ENCODE measurements at regions of chr10 and their contacts with region 1.

Region 1: DNA sequence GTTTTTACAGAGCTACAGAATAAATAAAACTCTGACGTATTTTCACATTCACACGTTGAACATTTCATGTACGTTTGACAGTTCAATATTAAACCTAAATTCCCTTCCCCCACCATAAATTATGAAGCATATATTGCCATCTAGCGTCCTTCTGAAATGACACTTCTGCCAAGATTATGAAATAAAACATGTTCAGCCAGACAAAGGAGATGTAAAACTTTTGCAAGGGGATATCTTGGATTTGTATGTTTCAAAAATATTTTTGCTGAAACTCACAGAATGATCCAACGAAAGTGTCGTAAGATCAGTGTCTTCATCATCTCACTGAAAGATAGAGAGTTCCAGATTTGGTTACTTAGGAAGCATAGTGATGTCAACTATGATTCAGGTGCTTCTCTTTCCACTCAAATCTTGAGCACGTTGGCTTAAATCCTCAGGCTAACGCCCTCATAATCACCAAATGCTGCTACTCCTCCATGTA is 904.3 kb downstream of the XPNPEP1 start:
- DNase-seq: no peak
- ATAC-seq: no peak
- H3K4me3 ChIP-seq: no peak overlapping the region
- H3K4me3 Mint-ChIP-seq: no peak overlapping the region
- H3K27ac ChIP-seq: no peak overlapping the region
- H3K27ac Mint-ChIP-seq: no peak overlapping the region
- H3K4me1 ChIP-seq: no peaks in the 10 kb centered on the region
- H3K4me1 Mint-ChIP-seq: no peaks in the 10 kb centered on the region
- H3K27me3 ChIP-seq: no peaks in the 10 kb centered on the region
- H3K27me3 Mint-ChIP-seq: no peaks in the 10 kb centered on the region
- CTCF ChIP-seq: no peak

Region 2: GRCh38 chr10:108655057-108655456 is 363.9 kb before region 1 on chr10:
- CTCF ChIA-PET with region 1: no interaction called
- POLR2A ChIA-PET with region 1: no interaction called
- intact Hi-C with region 1: loop called in 1 of 2 experiments (anchors 5 kb)
- DNase-seq: no peak
- ATAC-seq: no peak
- H3K4me3 ChIP-seq: no peak overlapping the region
- H3K4me3 Mint-ChIP-seq: no peak overlapping the region
- H3K27ac ChIP-seq: no peak overlapping the region
- H3K27ac Mint-ChIP-seq: no peak overlapping the region
- H3K4me1 ChIP-seq: no peaks in the 10 kb centered on the region
- H3K4me1 Mint-ChIP-seq: no peaks in the 10 kb centered on the region
- H3K27me3 ChIP-seq: no peaks in the 10 kb centered on the region
- H3K27me3 Mint-ChIP-seq: no peaks in the 10 kb centered on the region
- CTCF ChIP-seq: no peak

Region 3: GRCh38 chr10:109306698-109307097 is 287.7 kb after region 1 on chr10:
- CTCF ChIA-PET with region 1: no interaction called
- POLR2A ChIA-PET with region 1: no interaction called
- intact Hi-C with region 1: no loop called
- DNase-seq: no peak
- ATAC-seq: no peak
- H3K4me3 ChIP-seq: no peak overlapping the region
- H3K4me3 Mint-ChIP-seq: no peak overlapping the region
- H3K27ac ChIP-seq: no peak overlapping the region
- H3K27ac Mint-ChIP-seq: no peak overlapping the region
- H3K4me1 ChIP-seq: no peaks in the 10 kb centered on the region
- H3K4me1 Mint-ChIP-seq: no peaks in the 10 kb centered on the region
- H3K27me3 ChIP-seq: no peaks in the 10 kb centered on the region
- H3K27me3 Mint-ChIP-seq: no peaks in the 10 kb centered on the region
- CTCF ChIP-seq: no peak

Measured in CD8-positive, alpha-beta T cell (primary cell).